ENCODE measurements at regions of chr12 and their contacts with region 1.

Region 1: DNA sequence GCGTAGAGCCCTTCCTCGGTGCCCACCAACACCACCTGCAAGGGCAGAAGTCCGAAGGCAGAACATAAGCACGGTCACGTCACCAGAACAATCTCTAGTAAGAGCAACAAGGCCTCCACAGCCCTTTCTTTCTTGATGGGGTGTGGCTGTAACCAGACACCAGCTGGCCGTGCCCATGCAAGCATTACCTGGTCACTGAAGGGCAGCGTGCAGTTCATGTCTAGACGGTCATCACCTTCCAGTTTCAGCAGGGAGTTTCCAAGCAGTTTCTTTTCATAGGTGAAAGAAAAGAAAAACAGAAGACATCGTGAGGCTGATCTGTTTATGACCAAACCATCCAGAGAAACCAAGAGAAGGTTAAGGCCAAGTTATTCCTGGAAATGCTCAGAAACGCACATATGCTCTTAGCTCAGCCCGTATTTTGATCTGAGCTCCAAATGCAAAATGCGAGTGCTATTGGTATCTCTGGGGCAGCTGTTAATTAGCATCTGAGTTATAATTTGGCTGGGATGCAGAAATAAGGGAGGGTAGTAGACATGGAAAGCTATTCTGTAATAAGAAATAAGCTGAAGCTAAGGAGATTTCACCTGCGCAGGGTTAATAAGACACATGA is 42.5 kb downstream of the PRKAB1 start:
- DNase-seq: peak in 3 of 4 donors; percentile 9 to 70 (median 57)
- ATAC-seq: peak; percentile 80
- H3K4me3 ChIP-seq: no peak overlapping the region
- H3K27ac ChIP-seq: peak overlapping the region; percentile 65 to 74
- H3K4me1 ChIP-seq: peaks cover 4 to 5% of the 10 kb centered on the region in 2 donors
- H3K27me3 ChIP-seq: no peaks in the 10 kb centered on the region
- CTCF ChIP-seq: no peak

Region 2: GRCh38 chr12:119589097-119589496 is 121.4 kb before region 1 on chr12:
- intact Hi-C with region 1: no loop called
- DNase-seq: peak in 1 of 4 donors; percentile 15
- ATAC-seq: peak; percentile 44
- H3K4me3 ChIP-seq: no peak overlapping the region
- H3K27ac ChIP-seq: no peak overlapping the region
- H3K4me1 ChIP-seq: peaks cover 0 to 10% of the 10 kb centered on the region in 2 donors
- H3K27me3 ChIP-seq: peaks cover 7 to 20% of the 10 kb centered on the region in 2 donors
- CTCF ChIP-seq: no peak

Region 3: GRCh38 chr12:119772431-119772830 is 62.0 kb after region 1 on chr12:
- intact Hi-C with region 1: loop called in 1 of 2 experiments (anchors 10 kb)
- DNase-seq: no peak
- ATAC-seq: no peak
- H3K4me3 ChIP-seq: no peak overlapping the region
- H3K27ac ChIP-seq: no peak overlapping the region
- H3K4me1 ChIP-seq: no peaks in the 10 kb centered on the region
- H3K27me3 ChIP-seq: no peaks in the 10 kb centered on the region
- CTCF ChIP-seq: no peak